A673 (cell line): ENCODE measurements at regions of chr10 and their contacts with region 1.

Region 1: DNA sequence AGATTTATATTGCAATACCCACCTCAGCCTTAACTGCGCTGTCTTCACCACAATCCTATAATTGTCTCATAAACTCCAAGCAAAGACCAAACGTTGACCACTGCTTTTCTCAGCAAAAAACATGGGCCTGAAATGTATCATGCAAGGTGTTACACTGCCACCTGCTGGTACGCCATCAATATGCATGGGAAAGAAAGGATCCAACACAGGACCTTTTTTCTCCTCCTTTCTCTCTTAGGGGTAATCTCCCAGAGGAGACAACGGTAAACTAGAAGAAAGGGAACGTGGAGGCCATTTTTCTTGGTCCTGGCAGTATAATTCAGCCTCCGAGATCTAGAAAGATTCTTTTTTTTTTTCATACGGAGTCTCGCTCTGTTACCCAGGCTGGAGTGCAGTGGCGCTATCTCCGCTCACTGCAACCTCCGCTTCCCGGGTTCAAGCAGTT is 79.1 kb upstream of the MPP7 start:
- DNase-seq: peak; percentile 91
- H3K4me3 ChIP-seq: no peak overlapping the region
- H3K27ac ChIP-seq: no peak overlapping the region
- H3K4me1 ChIP-seq: no peaks in the 10 kb centered on the region
- H3K27me3 ChIP-seq: no peaks in the 10 kb centered on the region
- CTCF ChIP-seq: peak; percentile 90

Region 2: DNA sequence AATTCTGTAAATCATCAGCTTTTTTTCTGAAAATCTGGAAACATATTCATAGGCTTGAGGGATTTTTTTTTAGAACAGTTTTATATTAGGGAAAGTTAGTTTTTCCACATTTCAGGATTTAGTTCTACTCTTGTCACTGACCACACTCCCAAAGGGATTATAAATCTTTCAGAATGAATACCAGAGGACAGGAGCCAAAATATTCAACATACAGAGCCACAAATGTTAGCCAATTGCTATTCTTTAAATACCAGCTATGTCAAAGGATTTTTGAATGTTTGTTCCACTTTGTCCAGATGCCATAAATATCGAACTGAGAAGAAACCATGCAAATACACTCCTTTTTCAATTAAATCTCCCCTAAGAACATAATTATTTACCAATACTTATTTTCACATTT is 433.7 kb before region 1 on chr10:
- CTCF ChIA-PET with region 1: interaction called, 17 read pairs
- POLR2A ChIA-PET with region 1: no interaction called
- intact Hi-C with region 1: no loop called
- DNase-seq: no peak
- H3K4me3 ChIP-seq: no peak overlapping the region
- H3K27ac ChIP-seq: no peak overlapping the region
- H3K4me1 ChIP-seq: peaks cover 8% of the 10 kb centered on the region
- H3K27me3 ChIP-seq: peaks cover 19% of the 10 kb centered on the region
- CTCF ChIP-seq: no peak

Region 3: GRCh38 chr10:28087661-28088351 is 294.1 kb before region 1 on chr10:
- CTCF ChIA-PET with region 1: no interaction called
- POLR2A ChIA-PET with region 1: no interaction called
- intact Hi-C with region 1: no loop called
- DNase-seq: peak; percentile 32
- H3K4me3 ChIP-seq: no peak overlapping the region
- H3K27ac ChIP-seq: no peak overlapping the region
- H3K4me1 ChIP-seq: no peaks in the 10 kb centered on the region
- H3K27me3 ChIP-seq: no peaks in the 10 kb centered on the region
- CTCF ChIP-seq: no peak

Region 4: GRCh38 chr10:28160866-28161405 is 221.0 kb before region 1 on chr10:
- CTCF ChIA-PET with region 1: no interaction called
- POLR2A ChIA-PET with region 1: no interaction called
- intact Hi-C with region 1: no loop called
- DNase-seq: no peak
- H3K4me3 ChIP-seq: no peak overlapping the region
- H3K27ac ChIP-seq: no peak overlapping the region
- H3K4me1 ChIP-seq: no peaks in the 10 kb centered on the region
- H3K27me3 ChIP-seq: no peaks in the 10 kb centered on the region
- CTCF ChIP-seq: no peak

Region 5: GRCh38 chr10:28250782-28251181 is 131.1 kb before region 1 on chr10:
- CTCF ChIA-PET with region 1: interaction called, 7 read pairs
- POLR2A ChIA-PET with region 1: no interaction called
- intact Hi-C with region 1: loop called (anchors 2 kb)
- DNase-seq: peak; percentile 9
- H3K4me3 ChIP-seq: no peak overlapping the region
- H3K27ac ChIP-seq: no peak overlapping the region
- H3K4me1 ChIP-seq: no peaks in the 10 kb centered on the region
- H3K27me3 ChIP-seq: peaks cover 5% of the 10 kb centered on the region
- CTCF ChIP-seq: peak; percentile 62

Region 6: GRCh38 chr10:28302638-28303488 is 79.1 kb before region 1 on chr10 and contains the start of gene MPP7:
- CTCF ChIA-PET with region 1: interaction called, 3 read pairs
- POLR2A ChIA-PET with region 1: no interaction called
- intact Hi-C with region 1: loop called (anchors 5 kb)
- DNase-seq: peak; percentile 97
- H3K4me3 ChIP-seq: peak within 1 kb of the TSS; percentile 87
- H3K27ac ChIP-seq: peak within 1 kb of the TSS; percentile 52
- H3K4me1 ChIP-seq: no peaks in the 10 kb centered on the region
- H3K27me3 ChIP-seq: peaks cover 47% of the 10 kb centered on the region
- CTCF ChIP-seq: peak; percentile 14; the same call in 1 of the 2 replicates
- total RNA-seq, gene MPP7: 1.5 and 2.0 TPM in 2 replicates

Region 7: DNA sequence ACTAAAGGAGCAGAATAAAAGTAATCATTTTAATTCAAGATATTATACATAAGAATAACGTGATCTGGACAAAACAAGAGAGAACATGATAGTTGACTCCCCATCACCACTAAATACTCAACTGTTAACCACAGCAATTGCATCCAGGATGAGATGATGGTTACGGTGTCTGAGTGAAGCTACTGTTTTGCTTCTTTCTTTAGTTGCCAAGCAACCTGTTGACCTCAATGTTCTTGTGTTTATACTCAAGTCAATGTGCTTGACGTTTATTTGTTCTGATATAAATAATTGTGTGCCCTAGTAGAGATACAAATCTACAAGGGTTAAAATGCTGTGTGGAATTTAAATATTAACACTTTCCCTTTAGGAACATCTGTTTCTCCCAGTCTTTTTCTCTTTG is 47.6 kb before region 1 on chr10:
- CTCF ChIA-PET with region 1: no interaction called
- POLR2A ChIA-PET with region 1: no interaction called
- intact Hi-C with region 1: no loop called
- DNase-seq: no peak
- H3K4me3 ChIP-seq: no peak overlapping the region
- H3K27ac ChIP-seq: no peak overlapping the region
- H3K4me1 ChIP-seq: peaks cover 3% of the 10 kb centered on the region
- H3K27me3 ChIP-seq: peaks cover 6% of the 10 kb centered on the region
- CTCF ChIP-seq: no peak